ENCODE measurements at regions of chr7 and their contacts with region 1.

Region 1: DNA sequence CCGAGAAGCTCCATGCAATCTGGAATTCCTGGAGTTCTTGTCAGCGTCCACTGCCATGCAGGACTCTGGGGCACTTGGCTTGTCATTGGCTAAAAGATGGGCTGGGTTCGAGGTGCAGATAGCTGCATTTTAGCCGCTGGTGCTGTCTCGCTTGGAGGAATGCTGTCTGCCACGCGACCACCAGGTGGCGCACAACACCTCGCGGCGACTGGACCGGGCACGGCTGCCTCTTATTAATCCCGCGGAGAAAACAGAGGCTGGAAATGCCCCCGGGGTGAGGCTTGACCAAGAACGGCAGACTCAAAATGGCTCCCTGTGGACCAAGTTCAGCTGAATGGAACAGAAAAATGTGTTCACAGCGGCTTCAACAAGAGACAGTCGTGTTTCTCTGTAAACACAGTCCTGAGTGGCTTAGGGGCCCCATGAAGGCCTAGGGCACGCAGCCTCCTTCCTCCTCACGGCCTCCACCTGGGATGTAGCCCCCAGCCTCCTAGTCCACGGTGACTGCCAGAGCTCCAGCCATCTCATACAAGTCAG is 46.2 kb downstream of the AOC1 start:
- H3K4me3 Mint-ChIP-seq: no peak overlapping the region
- H3K27ac Mint-ChIP-seq: no peak overlapping the region
- H3K4me1 Mint-ChIP-seq: peaks cover 17% of the 10 kb centered on the region
- H3K27me3 Mint-ChIP-seq: peaks cover 83% of the 10 kb centered on the region

Region 2: GRCh38 chr7:150924369-150924781 is 25.8 kb after region 1 on chr7:
- intact Hi-C with region 1: no loop called
- H3K4me3 Mint-ChIP-seq: no peak overlapping the region
- H3K27ac Mint-ChIP-seq: no peak overlapping the region
- H3K4me1 Mint-ChIP-seq: peaks cover 6% of the 10 kb centered on the region
- H3K27me3 Mint-ChIP-seq: peaks cover 11% of the 10 kb centered on the region

Region 3: DNA sequence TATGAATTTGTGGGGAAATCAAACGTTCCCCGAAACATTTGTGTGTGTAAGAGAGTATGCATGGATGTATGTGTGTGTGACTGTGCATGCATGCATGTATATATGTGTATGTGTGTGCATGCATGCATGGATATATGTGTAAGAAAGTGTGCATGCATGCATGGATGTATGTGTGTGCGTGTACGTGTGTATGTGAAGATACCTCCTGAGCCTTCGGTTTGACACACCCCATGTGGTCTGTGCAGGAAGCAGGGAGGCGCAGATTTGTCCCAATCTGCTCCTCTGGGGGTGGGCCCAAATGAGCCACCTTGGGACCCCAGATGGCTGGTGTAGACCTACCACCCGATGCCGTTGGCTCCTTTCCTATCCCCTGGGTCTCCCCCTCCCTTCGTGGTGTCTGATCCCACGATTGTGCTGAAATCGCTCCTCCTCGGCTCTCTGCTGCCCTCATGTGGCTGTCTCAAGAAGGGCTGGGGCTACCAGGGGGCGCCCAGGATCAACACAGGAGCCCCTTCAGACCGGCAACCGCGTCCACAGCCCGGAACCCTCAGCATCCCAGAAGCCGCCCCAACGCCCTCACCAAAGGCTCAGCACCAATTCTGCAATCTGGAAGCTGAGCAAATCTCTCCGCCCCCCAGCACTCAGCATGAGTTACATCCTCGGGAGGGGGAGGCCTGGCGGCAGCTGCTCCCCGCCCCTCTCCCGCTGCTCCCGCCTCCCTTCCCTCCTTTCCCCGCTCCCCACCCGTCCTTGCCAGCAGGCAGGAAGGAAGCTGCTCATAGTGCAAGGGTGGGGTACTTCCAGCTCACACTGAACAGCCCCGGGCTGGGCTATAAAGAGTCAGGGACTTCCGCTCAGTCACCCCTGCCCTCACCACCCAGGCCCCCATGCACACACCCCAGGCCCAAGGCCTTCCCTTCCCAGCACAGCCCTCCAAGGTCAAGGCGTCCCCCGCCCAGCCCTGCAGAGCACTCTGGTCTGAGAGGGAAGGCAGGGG is 90.0 kb after region 1 on chr7:
- intact Hi-C with region 1: loop called (anchors 5 kb)
- H3K4me3 Mint-ChIP-seq: peak overlapping the region; percentile 39
- H3K27ac Mint-ChIP-seq: peak overlapping the region; percentile 1
- H3K4me1 Mint-ChIP-seq: peaks cover 30% of the 10 kb centered on the region
- H3K27me3 Mint-ChIP-seq: peaks cover 66% of the 10 kb centered on the region